Calu3 (cell line): ENCODE measurements at regions of chr3 and their contacts with region 1.

Region 1: GRCh38 chr3:197456261-197457091 is 99.3 kb downstream of the BDH1 start:
- DNase-seq: peak; percentile 84
- H3K4me3 Mint-ChIP-seq: peak overlapping the region; percentile 63
- H3K27ac Mint-ChIP-seq: peak overlapping the region; percentile 53
- H3K4me1 Mint-ChIP-seq: peaks cover 21% of the 10 kb centered on the region
- H3K27me3 Mint-ChIP-seq: peaks cover 16% of the 10 kb centered on the region
- CTCF ChIP-seq: no peak

Region 2: GRCh38 chr3:197224034-197224444 is 232.4 kb before region 1 on chr3:
- CTCF ChIA-PET with region 1: interaction called, 4 read pairs
- intact Hi-C with region 1: loop called (anchors 10 kb)
- DNase-seq: peak; percentile 24
- H3K4me3 Mint-ChIP-seq: no peak overlapping the region
- H3K27ac Mint-ChIP-seq: no peak overlapping the region
- H3K4me1 Mint-ChIP-seq: peaks cover 25% of the 10 kb centered on the region
- H3K27me3 Mint-ChIP-seq: no peaks in the 10 kb centered on the region
- CTCF ChIP-seq: peak; percentile 48

Region 3: DNA sequence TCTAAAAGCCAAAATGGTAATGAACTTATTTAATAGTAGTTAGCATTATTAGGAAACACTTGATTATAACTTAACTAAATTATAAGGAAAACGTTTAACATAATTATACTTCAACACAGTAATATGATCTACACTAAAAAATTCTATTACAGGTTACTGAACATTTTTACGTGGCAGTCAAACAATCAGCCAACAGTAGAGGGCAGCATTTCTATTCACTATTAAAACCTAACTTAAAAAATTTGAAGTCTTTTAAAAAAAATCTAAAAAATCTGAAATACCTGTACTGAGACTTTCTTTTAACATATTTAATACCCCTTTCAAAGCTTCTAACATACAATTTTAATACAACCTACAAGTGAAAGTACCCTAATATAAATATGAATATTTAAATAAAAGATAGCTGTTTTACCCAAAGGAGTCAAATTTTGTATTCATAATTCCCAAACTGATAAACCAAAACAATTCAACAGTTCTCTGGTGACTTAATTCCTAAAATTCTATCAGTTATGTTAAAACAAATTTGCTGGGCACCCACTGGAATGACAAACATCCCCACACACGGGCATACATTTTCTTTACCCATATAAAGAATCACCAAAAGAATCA is 199.5 kb before region 1 on chr3:
- CTCF ChIA-PET with region 1: interaction called, 14 read pairs
- intact Hi-C with region 1: loop called (anchors 1 kb)
- DNase-seq: peak; percentile 27
- H3K4me3 Mint-ChIP-seq: no peak overlapping the region
- H3K27ac Mint-ChIP-seq: no peak overlapping the region
- H3K4me1 Mint-ChIP-seq: peaks cover 8% of the 10 kb centered on the region
- H3K27me3 Mint-ChIP-seq: no peaks in the 10 kb centered on the region
- CTCF ChIP-seq: peak; percentile 28

Region 4: DNA sequence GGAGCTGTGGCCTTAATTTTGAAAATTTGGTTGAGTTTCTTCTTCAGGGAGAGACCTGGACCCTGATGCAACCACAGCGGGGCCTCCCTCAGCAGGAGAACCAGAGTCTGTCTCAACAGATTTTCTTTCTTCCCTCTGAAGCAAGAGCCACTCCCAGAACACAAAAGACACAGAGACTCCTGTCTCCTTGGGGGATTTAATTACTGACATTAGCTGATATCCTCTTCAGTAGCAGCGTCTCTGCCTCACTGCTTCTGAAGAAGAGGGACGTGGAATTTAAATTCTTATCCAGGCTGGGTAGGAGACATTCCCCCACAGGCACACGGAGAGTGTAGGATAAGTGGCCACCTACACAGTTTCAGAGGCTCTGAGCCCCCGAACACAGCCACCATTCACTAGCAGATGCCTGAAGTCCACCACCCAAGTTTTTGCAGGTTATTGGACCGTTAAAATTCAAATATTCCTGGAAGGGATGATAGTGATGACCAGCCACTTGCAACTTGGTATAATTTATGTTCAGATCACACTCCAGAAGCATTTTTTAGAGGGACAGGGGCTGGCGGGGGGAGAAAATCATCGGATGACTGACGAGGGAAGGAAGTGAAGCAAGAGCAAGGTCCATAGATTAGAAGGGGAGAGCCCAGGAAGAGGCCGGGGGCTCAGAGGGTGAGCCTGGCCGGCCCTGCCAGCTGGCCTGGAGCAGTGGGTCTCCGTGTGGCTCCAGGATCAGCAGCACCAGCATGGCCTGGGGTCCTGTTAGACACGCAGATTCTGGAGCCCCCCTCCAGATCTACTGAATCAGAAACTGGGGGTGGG is 10.4 kb before region 1 on chr3:
- CTCF ChIA-PET with region 1: no interaction called
- intact Hi-C with region 1: no loop called
- DNase-seq: no peak
- H3K4me3 Mint-ChIP-seq: no peak overlapping the region
- H3K27ac Mint-ChIP-seq: no peak overlapping the region
- H3K4me1 Mint-ChIP-seq: no peaks in the 10 kb centered on the region
- H3K27me3 Mint-ChIP-seq: peaks cover 16% of the 10 kb centered on the region
- CTCF ChIP-seq: no peak

Region 5: DNA sequence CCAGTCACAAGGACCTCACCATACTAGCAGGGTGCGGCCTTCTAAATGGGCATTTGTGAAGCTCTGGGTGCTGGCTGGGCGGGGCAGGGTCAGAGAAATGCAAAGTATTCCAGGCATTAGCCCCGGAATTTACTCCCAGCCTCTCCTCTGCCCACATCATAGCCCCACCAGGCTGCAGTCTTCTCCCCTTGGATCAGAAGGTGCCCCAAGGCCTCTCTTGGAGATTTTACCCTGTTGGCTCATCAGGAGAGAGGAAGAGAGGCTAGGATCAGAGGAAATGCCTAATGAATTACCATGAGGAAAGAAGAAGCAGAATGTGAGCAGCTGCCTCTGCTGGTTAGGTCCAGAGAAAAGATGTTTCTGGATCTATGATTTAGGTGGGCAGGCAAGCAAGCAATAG is 33.6 kb after region 1 on chr3:
- CTCF ChIA-PET with region 1: no interaction called
- intact Hi-C with region 1: loop called (anchors 5 kb)
- DNase-seq: peak; percentile 77
- H3K4me3 Mint-ChIP-seq: no peak overlapping the region
- H3K27ac Mint-ChIP-seq: peak overlapping the region; percentile 91
- H3K4me1 Mint-ChIP-seq: peaks cover 67% of the 10 kb centered on the region
- H3K27me3 Mint-ChIP-seq: no peaks in the 10 kb centered on the region
- CTCF ChIP-seq: no peak